ENCODE measurements at regions of chr7 and their contacts with region 1.

Region 1: DNA sequence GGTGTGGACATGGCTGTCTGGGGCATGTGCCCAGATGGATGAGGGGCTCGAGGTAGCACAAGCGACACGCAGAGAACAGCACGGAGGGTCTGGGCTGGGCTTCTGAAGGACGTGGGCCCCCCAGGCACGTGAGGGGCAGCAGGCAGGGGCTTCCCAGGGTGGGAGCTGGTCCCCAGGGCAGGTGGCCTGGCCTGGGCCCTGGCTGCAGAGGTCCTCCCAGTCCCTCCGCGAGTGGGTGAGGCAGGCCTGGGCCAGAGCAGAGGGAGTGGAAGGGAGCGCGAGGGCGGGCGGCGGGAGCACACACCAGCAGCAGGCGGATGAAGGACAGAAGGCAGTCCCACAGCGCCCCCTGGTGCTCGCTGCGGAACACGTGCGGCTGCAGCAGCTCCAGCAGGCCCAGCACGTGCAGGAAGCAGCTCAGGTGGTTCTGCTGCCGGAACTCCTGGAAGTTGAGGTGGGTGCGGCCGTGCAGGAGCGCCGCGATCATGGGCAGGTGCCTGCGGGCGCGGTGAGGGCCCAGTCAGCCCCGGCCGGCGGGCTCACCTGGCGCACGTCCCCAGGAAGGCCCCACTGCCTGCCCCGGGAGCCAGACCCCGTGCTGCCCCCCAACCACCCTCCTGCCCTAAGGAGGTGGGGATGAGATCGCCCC is 14.7 kb upstream of the MICALL2 start:
- DNase-seq: peak; percentile 73 to 91
- H3K4me3 ChIP-seq: no peak overlapping the region
- H3K27ac ChIP-seq: no peak overlapping the region
- H3K4me1 ChIP-seq: no peaks in the 10 kb centered on the region
- H3K27me3 ChIP-seq: no peaks in the 10 kb centered on the region
- CTCF ChIP-seq: peak; percentile 86 to 96

Region 2: GRCh38 chr7:1225441-1226185 is 248.4 kb before region 1 on chr7:
- intact Hi-C with region 1: loop called (anchors 5 kb)
- DNase-seq: no peak
- H3K4me3 ChIP-seq: no peak overlapping the region
- H3K27ac ChIP-seq: no peak overlapping the region
- H3K4me1 ChIP-seq: peaks cover 0 to 24% (median 12%) of the 10 kb centered on the region in 4 donors
- H3K27me3 ChIP-seq: peaks cover 15 to 97% of the 10 kb centered on the region in 2 donors
- CTCF ChIP-seq: peak; percentile 66 to 73

Region 3: DNA sequence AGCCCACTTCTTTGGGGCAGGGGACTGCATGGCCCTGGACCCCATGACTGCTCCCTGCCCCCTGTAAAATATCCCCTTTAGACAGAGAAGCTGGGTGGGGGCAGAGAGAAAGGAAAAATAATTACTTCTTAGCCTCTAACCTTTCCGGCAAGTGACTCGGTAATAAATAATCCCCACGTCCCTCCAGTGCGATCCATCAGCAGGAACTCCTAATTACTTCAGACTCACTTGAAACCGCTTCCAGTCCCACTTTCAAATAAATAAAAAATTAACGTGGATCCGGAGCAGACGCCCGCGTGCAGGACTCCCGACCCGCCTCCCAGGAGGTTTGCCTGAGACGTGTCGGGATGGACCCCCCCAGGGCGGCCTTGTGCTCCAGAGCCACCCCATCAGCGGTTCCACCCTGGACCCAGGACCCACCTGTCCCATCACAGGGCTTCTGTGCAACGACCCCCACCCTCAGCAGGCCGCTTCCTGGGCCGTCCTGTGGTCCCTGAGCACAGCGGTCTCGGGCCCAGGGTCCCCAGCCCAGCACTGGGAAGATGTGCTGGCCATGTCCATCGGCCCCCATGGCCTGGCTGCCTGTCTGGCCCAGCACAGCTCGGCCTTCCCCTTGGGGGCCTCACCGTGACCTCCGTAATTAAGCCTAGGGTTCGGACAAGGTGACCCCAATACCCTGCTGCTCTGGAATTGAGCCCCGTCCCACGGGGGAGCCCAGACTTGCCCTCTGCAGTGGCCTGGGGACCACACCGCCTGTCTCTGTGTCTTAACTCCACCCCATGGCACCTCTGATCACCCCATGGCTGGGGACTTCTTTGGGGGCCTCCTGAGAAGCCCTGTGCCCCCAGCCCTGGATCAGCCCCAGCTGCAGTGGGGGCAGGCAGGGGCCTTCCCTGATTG is 133.3 kb before region 1 on chr7:
- intact Hi-C with region 1: no loop called
- DNase-seq: no peak
- H3K4me3 ChIP-seq: no peak overlapping the region
- H3K27ac ChIP-seq: no peak overlapping the region
- H3K4me1 ChIP-seq: no peaks in the 10 kb centered on the region
- H3K27me3 ChIP-seq: peaks cover 0 to 48% of the 10 kb centered on the region in 2 donors
- CTCF ChIP-seq: no peak

Measured in tibial artery (tissue), 4 donors.